Cardiac septum (tissue), 1 donor: ENCODE measurements at regions of chr11 and their contacts with region 1.

Region 1: DNA sequence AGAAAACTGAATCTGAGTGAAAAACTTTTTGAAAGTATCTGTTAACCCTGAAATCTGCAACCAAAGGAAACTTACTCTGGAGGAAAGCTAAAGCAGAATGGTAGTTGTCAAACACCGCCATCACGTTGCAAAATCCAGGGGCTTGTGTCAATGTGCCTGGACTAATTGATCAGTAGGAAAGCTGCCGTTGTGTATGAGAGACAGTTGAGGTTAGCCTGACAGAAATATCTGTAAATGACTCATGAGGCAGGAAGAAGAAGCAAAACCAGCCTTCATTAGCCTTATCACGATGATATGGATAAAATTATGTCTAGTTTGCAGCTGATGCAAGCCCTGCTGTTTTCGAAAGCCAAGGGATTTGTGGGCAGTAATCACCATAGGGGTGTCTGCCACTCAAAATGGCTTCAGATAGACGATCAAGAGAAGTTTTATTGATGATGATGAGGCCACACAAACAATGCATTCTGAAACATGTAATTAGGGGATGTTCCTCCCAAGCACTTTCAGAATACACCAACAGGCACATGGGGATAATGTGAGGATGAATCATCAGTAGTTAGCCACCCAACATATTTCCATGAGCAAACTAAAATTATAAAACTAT is 8.9 kb downstream of the SCGB1A1 start:
- DNase-seq: no peak

Region 2: GRCh38 chr11:62560566-62561103 is 132.9 kb after region 1 on chr11:
- intact Hi-C with region 1: loop called (anchors 2 kb)
- DNase-seq: peak; percentile 91